ENCODE measurements at regions of chr12 and their contacts with region 1.

Region 1: DNA sequence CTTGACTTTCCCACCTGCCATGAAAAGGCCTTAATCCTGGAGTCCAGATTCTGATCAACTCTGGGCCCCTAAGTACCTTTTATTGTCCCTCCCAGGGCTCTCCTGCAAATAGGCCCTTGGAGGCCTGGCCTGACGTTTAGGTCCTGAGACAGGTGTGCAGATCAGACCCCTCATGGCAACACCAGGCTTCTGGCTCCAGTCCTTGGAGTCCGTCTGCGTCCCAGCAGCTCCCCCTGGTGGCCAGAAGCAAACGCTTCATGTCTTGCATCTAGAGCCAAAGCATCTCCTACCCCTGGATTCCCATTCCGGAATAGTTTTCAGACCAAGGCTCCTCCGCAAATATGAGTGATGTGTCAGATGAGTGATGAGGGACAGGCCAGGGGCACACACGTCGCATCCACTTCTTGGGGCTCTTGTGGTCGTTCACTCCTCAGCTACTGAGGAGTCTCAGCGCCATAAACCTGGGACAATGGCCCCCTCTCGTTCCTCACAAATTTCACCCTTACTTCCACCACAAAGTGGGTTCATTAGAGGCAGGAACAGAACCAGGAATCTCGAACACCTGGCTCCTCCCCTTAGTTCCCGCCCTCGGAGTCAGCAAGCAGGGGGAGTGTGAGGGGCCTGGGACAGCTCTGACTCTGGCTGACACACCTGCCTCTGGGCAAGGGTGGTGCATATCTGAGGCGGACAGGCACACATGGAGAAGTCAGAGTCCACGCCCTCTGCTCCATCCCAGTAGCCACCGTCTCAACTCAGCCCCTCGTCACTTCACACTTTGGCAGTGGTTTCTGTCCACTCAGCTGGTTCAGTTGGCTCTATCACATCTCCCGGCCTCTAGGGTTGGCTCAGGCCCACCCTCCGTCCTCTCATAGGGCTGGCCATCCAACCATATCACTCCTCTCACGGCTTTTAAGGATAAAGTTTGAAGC is 77.9 kb upstream of the PWP1 start:
- DNase-seq: no peak
- H3K4me3 ChIP-seq: no peak overlapping the region
- H3K27ac ChIP-seq: no peak overlapping the region
- H3K4me1 ChIP-seq: no peaks in the 10 kb centered on the region
- H3K27me3 ChIP-seq: no peaks in the 10 kb centered on the region
- CTCF ChIP-seq: peak; percentile 72 to 86 (median 78)
- POLR2A ChIP-seq: no peak

Region 2: DNA sequence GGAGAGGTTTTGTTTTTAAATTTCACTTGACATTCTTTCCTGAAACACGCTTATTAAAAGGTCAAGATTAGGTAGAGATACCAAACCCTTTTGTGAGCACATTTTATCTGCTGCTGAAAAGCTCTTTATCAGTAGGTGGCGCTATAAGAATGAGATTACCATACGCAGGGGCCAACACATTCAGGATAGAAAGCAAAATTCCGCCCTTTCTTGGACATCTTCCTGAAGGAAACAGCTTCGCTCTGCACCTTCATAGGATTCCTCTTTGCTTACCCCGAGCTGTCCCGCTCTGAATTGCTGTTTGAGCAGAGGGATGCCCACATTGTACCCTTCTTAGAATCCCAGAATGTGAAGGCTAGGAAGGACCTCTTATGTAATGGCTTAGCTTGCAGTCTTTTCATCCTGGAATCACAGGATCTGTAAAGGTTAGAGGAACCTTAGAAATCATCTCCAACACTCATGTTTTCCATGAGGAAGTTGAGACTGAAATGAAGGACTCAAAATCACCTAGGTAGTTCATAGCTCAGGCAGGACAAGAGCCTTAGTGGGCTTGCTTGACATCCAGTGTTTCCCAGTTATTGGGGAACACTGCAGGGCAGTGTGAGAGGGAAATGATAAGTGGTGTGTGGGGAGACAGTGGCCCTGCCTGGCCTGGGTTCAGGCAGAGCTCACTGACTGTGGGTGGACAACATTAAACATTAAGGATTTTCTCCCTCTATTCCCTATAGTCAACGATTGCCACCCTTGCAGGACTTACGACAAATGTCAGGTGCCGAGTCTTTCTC is 475.7 kb before region 1 on chr12:
- intact Hi-C with region 1: loop called (anchors 5 kb)
- DNase-seq: no peak
- H3K4me3 ChIP-seq: no peak overlapping the region
- H3K27ac ChIP-seq: no peak overlapping the region
- H3K4me1 ChIP-seq: no peaks in the 10 kb centered on the region
- H3K27me3 ChIP-seq: no peaks in the 10 kb centered on the region
- CTCF ChIP-seq: peak; percentile 48 to 70 (median 62)
- POLR2A ChIP-seq: no peak